Posterior vena cava (tissue), 2 donors: ENCODE measurements at regions of chr21 and their contacts with region 1.

Region 1: GRCh38 chr21:46160907-46161632 is 5.7 kb upstream of the FTCD start:
- DNase-seq: peak; percentile 75

Region 2: GRCh38 chr21:45724345-45724961 is 436.6 kb before region 1 on chr21:
- intact Hi-C with region 1: loop called in 1 of 2 experiments (anchors 10 kb)
- DNase-seq: no peak

Region 3: GRCh38 chr21:46097336-46098293 is 63.5 kb before region 1 on chr21 and contains the start of gene COL6A2:
- intact Hi-C with region 1: no loop called
- DNase-seq: peak; percentile 87
- total RNA-seq, gene COL6A2: 1,504 to 1,642 TPM